GM12878 (cell line): ENCODE measurements at regions of chr2 and their contacts with region 1.

Region 1: DNA sequence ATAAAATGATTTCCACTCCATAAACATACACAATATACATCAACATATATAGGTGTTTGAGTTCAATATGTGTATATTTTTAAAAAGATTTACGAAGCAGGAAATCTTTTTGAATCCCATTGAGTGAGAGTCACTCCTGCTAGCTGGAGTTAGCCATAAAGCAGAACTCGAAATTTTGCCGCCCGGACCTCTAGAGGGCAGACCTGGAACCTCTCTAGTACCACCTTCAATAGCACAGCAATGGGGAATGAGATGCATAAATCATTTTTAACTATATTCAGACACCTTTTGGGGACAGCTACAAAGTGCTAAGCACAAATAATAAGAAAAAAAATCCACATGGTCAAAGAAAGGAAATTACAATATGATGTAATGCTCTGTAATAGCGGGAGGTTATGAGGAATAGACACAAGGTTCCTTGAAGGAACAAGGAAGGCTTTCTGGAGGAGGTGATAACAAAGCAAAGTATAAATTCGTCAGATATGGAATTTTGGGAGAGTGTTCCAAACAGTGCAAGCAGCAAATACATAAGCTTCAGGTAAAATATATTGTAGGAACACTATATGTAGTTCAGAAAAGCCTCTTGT is 533.4 kb downstream of the ERBB4 start:
- DNase-seq: no peak
- ATAC-seq: peak; percentile 89
- H3K4me3 ChIP-seq: no peak overlapping the region
- H3K27ac ChIP-seq: no peak overlapping the region
- H3K4me1 ChIP-seq: no peaks in the 10 kb centered on the region
- H3K27me3 ChIP-seq: no peaks in the 10 kb centered on the region
- CTCF ChIP-seq: peak; percentile 51 to 62 (median 51)
- EP300 ChIP-seq: no peak
- POLR2A ChIP-seq: no peak
- RAD21 ChIP-seq: peak; percentile 70

Region 2: DNA sequence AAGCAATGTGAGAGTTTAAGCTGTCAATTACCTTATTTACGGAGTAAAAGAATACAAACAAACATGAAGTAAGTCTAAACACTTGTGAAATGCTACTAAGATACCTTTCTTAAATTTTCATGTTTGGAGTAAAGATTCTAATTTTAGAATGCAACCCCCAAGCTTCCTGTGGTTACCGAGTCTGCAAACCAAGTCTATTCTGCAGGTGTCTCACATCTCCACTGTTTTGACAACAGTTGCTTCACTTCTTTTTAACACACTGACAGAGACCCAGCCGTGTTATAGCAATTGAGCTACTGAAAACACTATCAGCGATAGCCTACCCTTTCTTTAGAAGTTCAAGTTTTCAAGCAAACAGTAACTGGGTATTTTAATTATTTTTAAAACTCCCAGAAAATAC is 74.8 kb before region 1 on chr2:
- CTCF ChIA-PET with region 1: interaction called, 9 read pairs
- POLR2A ChIA-PET with region 1: no interaction called
- RAD21 ChIA-PET with region 1: interaction called, 15 read pairs
- SMC1A ChIA-PET with region 1: interaction called, 5 read pairs
- in situ Hi-C with region 1: no loop called
- intact Hi-C with region 1: no loop called
- DNase-seq: peak; percentile 2
- ATAC-seq: peak; percentile 82
- H3K4me3 ChIP-seq: no peak overlapping the region
- H3K27ac ChIP-seq: no peak overlapping the region
- H3K4me1 ChIP-seq: no peaks in the 10 kb centered on the region
- H3K27me3 ChIP-seq: no peaks in the 10 kb centered on the region
- CTCF ChIP-seq: no peak
- EP300 ChIP-seq: no peak; a peak in 1 of 4 replicates
- POLR2A ChIP-seq: no peak
- RAD21 ChIP-seq: peak; percentile 62

Region 3: GRCh38 chr2:212021947-212022346 is 16.8 kb after region 1 on chr2:
- CTCF ChIA-PET with region 1: interaction called, 15 read pairs
- POLR2A ChIA-PET with region 1: no interaction called
- RAD21 ChIA-PET with region 1: interaction called, 8 read pairs
- SMC1A ChIA-PET with region 1: interaction called, 7 read pairs
- in situ Hi-C with region 1: no loop called
- intact Hi-C with region 1: no loop called
- DNase-seq: no peak
- ATAC-seq: no peak
- H3K4me3 ChIP-seq: no peak overlapping the region
- H3K27ac ChIP-seq: no peak overlapping the region
- H3K4me1 ChIP-seq: no peaks in the 10 kb centered on the region
- H3K27me3 ChIP-seq: no peaks in the 10 kb centered on the region
- CTCF ChIP-seq: no peak
- EP300 ChIP-seq: no peak
- POLR2A ChIP-seq: no peak
- RAD21 ChIP-seq: no peak

Region 4: DNA sequence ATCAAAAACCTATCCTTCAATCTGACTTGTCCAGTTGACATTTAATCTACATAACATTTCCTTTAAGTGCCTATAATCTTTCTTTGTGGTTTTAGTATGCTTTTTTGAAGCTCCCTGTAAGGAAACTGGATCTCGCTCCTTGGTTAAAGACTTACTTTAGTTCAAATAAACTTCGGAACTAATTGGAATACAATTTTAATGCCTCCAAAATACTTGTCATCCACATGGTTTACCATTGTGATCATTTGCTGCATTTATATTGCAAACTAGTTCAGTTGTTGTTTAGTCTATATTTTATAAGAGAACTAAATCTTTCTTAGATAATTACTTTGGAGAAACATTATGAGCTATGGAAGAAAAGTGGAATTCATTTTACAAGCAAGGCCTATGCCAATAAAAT is 37.4 kb after region 1 on chr2:
- CTCF ChIA-PET with region 1: interaction called, 5 read pairs
- POLR2A ChIA-PET with region 1: no interaction called
- RAD21 ChIA-PET with region 1: interaction called, 8 read pairs
- SMC1A ChIA-PET with region 1: interaction called, 12 read pairs
- in situ Hi-C with region 1: no loop called
- intact Hi-C with region 1: no loop called
- DNase-seq: no peak
- ATAC-seq: no peak
- H3K4me3 ChIP-seq: no peak overlapping the region
- H3K27ac ChIP-seq: no peak overlapping the region
- H3K4me1 ChIP-seq: no peaks in the 10 kb centered on the region
- H3K27me3 ChIP-seq: no peaks in the 10 kb centered on the region
- CTCF ChIP-seq: no peak
- EP300 ChIP-seq: no peak
- POLR2A ChIP-seq: no peak
- RAD21 ChIP-seq: no peak

Region 5: DNA sequence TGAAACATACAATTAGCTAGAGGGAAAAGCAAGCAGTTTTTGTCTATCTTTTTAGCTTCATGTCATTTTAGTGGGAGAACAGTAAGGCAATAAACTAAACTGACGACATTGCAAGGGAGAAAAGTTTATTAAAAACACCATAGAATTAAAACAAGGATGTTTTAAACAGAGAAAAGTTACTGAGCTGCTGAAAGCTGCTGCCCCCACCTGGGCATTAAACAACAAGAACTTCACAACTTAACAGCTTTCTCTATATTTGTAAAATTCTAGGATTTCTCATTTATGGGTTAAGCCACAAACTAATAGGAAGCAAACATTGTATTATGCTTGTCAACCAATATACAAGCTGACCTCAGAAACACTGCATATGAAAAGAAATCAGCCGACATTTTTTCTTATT is 244.3 kb after region 1 on chr2:
- CTCF ChIA-PET with region 1: interaction called, 32 read pairs
- POLR2A ChIA-PET with region 1: no interaction called
- RAD21 ChIA-PET with region 1: interaction called, 23 read pairs
- SMC1A ChIA-PET with region 1: interaction called, 25 read pairs
- in situ Hi-C with region 1: no loop called
- intact Hi-C with region 1: no loop called
- DNase-seq: no peak
- ATAC-seq: no peak
- H3K4me3 ChIP-seq: no peak overlapping the region
- H3K27ac ChIP-seq: no peak overlapping the region
- H3K4me1 ChIP-seq: no peaks in the 10 kb centered on the region
- H3K27me3 ChIP-seq: no peaks in the 10 kb centered on the region
- CTCF ChIP-seq: peak; percentile 6 to 28 (median 17); a peak in 1 of 6 replicates
- EP300 ChIP-seq: no peak
- POLR2A ChIP-seq: no peak
- RAD21 ChIP-seq: peak; percentile 53; the same call in 1 of the 2 replicates